ENCODE measurements at regions of chr1 and their contacts with region 1.

Region 1: GRCh38 chr1:85376356-85376755 is 88.6 kb downstream of the DDAH1 start:
- DNase-seq: no peak
- H3K4me3 ChIP-seq: no peak overlapping the region
- H3K27ac ChIP-seq: no peak overlapping the region
- H3K4me1 ChIP-seq: peaks cover 55% of the 10 kb centered on the region
- H3K27me3 ChIP-seq: no peaks in the 10 kb centered on the region
- CTCF ChIP-seq: no peak

Region 2: GRCh38 chr1:85438353-85438752 is 62.0 kb after region 1 on chr1:
- CTCF ChIA-PET with region 1: no interaction called
- POLR2A ChIA-PET with region 1: interaction called, 11 read pairs
- intact Hi-C with region 1: no loop called
- DNase-seq: peak; percentile 78
- H3K4me3 ChIP-seq: no peak overlapping the region
- H3K27ac ChIP-seq: peak overlapping the region; percentile 56
- H3K4me1 ChIP-seq: peaks cover 31% of the 10 kb centered on the region
- H3K27me3 ChIP-seq: no peaks in the 10 kb centered on the region
- CTCF ChIP-seq: no peak